ENCODE measurements at regions of chr10 and their contacts with region 1.

Region 1: GRCh38 chr10:110007701-110008517 is at the start of gene ADD3:
- DNase-seq: peak; percentile 91
- H3K4me3 ChIP-seq: peak within 1 kb of the TSS; percentile 70 to 82
- H3K27ac ChIP-seq: peak within 1 kb of the TSS; percentile 85 to 87
- H3K4me1 ChIP-seq: peaks cover 13% of the 10 kb centered on the region
- H3K27me3 ChIP-seq: no peaks in the 10 kb centered on the region
- CTCF ChIP-seq: no peak
- POLR2A ChIP-seq: peak; percentile 60
- total RNA-seq, gene ADD3: 76.4 to 127 TPM

Region 2: DNA sequence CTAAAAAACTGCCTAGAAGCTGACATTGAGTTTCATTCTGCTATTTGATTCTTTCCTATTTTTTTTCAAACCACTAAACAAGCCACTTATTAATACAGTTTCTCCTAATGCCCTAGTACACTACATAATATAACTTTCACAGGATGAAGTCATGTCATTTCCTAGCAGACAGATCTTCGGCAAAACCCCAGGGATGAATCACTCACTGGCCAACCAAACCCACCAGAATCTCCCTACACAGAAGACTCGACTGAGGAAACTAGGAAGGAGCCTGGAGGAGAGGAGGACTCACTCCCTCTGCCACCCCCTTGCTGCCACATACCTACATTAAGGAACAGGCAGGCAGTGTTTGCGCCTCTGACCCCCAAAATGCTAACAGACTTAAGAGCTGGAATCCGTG is 118.0 kb before region 1 on chr10:
- intact Hi-C with region 1: loop called (anchors 5 kb)
- DNase-seq: no peak
- H3K4me3 ChIP-seq: no peak overlapping the region
- H3K27ac ChIP-seq: no peak overlapping the region
- H3K4me1 ChIP-seq: peaks cover 4% of the 10 kb centered on the region
- H3K27me3 ChIP-seq: no peaks in the 10 kb centered on the region
- CTCF ChIP-seq: no peak
- POLR2A ChIP-seq: no peak

Region 3: GRCh38 chr10:109922976-109923921 is 84.7 kb before region 1 on chr10 and contains the start of gene XPNPEP1:
- intact Hi-C with region 1: loop called (anchors 2 kb)
- DNase-seq: peak; percentile 86
- H3K4me3 ChIP-seq: peak within 1 kb of the TSS; percentile 92
- H3K27ac ChIP-seq: peak within 1 kb of the TSS; percentile 87 to 93
- H3K4me1 ChIP-seq: no peaks in the 10 kb centered on the region
- H3K27me3 ChIP-seq: no peaks in the 10 kb centered on the region
- CTCF ChIP-seq: no peak
- POLR2A ChIP-seq: peak; percentile 84
- total RNA-seq, gene XPNPEP1: 53.4 to 64.3 TPM

Measured in prostate gland (tissue), 2 donors.